CD4-positive, alpha-beta memory T cell (primary cell): ENCODE measurements at regions of chr7 and their contacts with region 1.

Region 1: GRCh38 chr7:116862234-116862950 is at the start of gene CAPZA2:
- DNase-seq: peak; percentile 90 to 97 (median 95)
- H3K4me3 ChIP-seq: peak within 1 kb of the TSS; percentile 72 to 81
- H3K4me3 Mint-ChIP-seq: peak within 1 kb of the TSS; percentile 93 to 99 (median 97)
- H3K27ac ChIP-seq: peak within 1 kb of the TSS; percentile 80
- H3K27ac Mint-ChIP-seq: peak within 1 kb of the TSS; percentile 83 to 98 (median 97)
- H3K4me1 ChIP-seq: peaks cover 47% of the 10 kb centered on the region
- H3K4me1 Mint-ChIP-seq: peaks cover 31 to 56% (median 46%) of the 10 kb centered on the region in 4 donors
- H3K27me3 ChIP-seq: no peaks in the 10 kb centered on the region
- H3K27me3 Mint-ChIP-seq: peaks cover under 1 to 4% of the 10 kb centered on the region in 2 donors
- total RNA-seq, gene CAPZA2: 112 to 116 TPM

Region 2: GRCh38 chr7:116824449-116824848 is 37.9 kb before region 1 on chr7:
- CTCF ChIA-PET with region 1: no interaction called
- POLR2A ChIA-PET with region 1: no interaction called
- intact Hi-C with region 1: no loop called
- DNase-seq: no peak
- H3K4me3 ChIP-seq: no peak overlapping the region
- H3K4me3 Mint-ChIP-seq: no peak overlapping the region
- H3K27ac ChIP-seq: no peak overlapping the region
- H3K27ac Mint-ChIP-seq: no peak overlapping the region
- H3K4me1 ChIP-seq: no peaks in the 10 kb centered on the region
- H3K4me1 Mint-ChIP-seq: no peaks in the 10 kb centered on the region
- H3K27me3 ChIP-seq: no peaks in the 10 kb centered on the region
- H3K27me3 Mint-ChIP-seq: peaks cover 11 to 12% of the 10 kb centered on the region in 2 donors

Region 3: GRCh38 chr7:116940689-116941088 is 78.3 kb after region 1 on chr7:
- CTCF ChIA-PET with region 1: no interaction called
- POLR2A ChIA-PET with region 1: no interaction called
- intact Hi-C with region 1: no loop called
- DNase-seq: no peak
- H3K4me3 ChIP-seq: no peak overlapping the region
- H3K4me3 Mint-ChIP-seq: no peak overlapping the region
- H3K27ac ChIP-seq: no peak overlapping the region
- H3K27ac Mint-ChIP-seq: no peak overlapping the region
- H3K4me1 ChIP-seq: no peaks in the 10 kb centered on the region
- H3K4me1 Mint-ChIP-seq: no peaks in the 10 kb centered on the region
- H3K27me3 ChIP-seq: no peaks in the 10 kb centered on the region
- H3K27me3 Mint-ChIP-seq: peaks cover 2 to 16% of the 10 kb centered on the region in 2 donors

Region 4: GRCh38 chr7:116953727-116954442 is 91.5 kb after region 1 on chr7:
- CTCF ChIA-PET with region 1: no interaction called
- POLR2A ChIA-PET with region 1: interaction called, 4 read pairs
- intact Hi-C with region 1: loop called (anchors 1 kb)
- DNase-seq: peak in 3 of 5 donors; percentile 44 to 72 (median 68)
- H3K4me3 ChIP-seq: peak overlapping the region; percentile 70 to 80
- H3K4me3 Mint-ChIP-seq: peak overlapping the region; percentile 94 to 98 (median 96)
- H3K27ac ChIP-seq: peak overlapping the region; percentile 62
- H3K27ac Mint-ChIP-seq: peak overlapping the region; percentile 86 to 97 (median 94)
- H3K4me1 ChIP-seq: peaks cover 26% of the 10 kb centered on the region
- H3K4me1 Mint-ChIP-seq: peaks cover 15 to 32% (median 24%) of the 10 kb centered on the region in 4 donors
- H3K27me3 ChIP-seq: no peaks in the 10 kb centered on the region
- H3K27me3 Mint-ChIP-seq: no peaks in the 10 kb centered on the region

Region 5: DNA sequence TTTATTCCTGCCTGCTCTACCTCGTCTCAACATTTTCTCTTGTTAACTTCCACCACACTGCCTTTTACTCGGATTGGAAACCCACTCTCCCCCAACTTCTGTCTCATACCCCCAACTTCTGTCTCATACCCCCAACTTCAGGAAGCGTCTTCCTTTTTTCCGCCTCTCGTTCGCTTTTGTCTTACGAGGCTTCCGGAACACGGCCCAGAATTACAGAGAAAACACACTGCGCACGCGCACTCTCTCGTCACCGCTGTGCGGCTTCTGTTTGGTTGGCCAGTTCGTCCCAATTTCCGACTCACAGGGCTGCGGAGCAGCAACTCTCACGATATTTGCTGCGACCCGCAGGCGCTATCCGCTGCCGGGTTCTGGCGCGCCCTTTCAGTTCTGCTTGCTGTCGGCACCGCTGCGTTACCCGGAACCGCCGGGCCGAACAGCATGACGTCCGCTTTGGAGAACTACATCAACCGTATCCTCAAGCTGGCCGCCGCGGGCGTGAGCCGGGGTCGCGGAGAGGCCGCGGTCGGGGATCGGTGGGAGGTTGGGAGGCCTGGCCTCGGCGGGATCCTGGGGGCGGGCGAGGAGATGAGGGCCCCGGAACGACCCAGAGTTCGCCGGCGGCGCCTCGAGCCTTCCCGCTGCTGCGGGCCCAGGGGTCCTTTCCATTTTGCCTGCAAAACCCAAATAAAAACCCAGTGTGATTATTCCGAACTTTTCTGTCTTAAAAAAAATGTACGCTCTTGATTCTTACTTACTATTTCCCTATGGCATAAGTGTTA is 1321.6 kb after region 1 on chr7 and contains the start of gene LSM8:
- CTCF ChIA-PET with region 1: no interaction called
- POLR2A ChIA-PET with region 1: no interaction called
- intact Hi-C with region 1: loop called (anchors 1 kb)
- DNase-seq: peak; percentile 96 to 98 (median 97)
- H3K4me3 ChIP-seq: peak within 1 kb of the TSS; percentile 63 to 96
- H3K4me3 Mint-ChIP-seq: peak within 1 kb of the TSS; percentile 92 to 100 (median 98)
- H3K27ac ChIP-seq: peak within 1 kb of the TSS; percentile 95
- H3K27ac Mint-ChIP-seq: peak within 1 kb of the TSS; percentile 92 to 100 (median 100)
- H3K4me1 ChIP-seq: peaks cover 41% of the 10 kb centered on the region
- H3K4me1 Mint-ChIP-seq: peaks cover 29 to 55% (median 38%) of the 10 kb centered on the region in 4 donors
- H3K27me3 ChIP-seq: no peaks in the 10 kb centered on the region
- H3K27me3 Mint-ChIP-seq: no peaks in the 10 kb centered on the region
- total RNA-seq, gene LSM8: 59.0 to 64.1 TPM